Calu3 (cell line): ENCODE measurements at regions of chr2 and their contacts with region 1.

Region 1: GRCh38 chr2:137117386-137117785 is 352.0 kb downstream of the THSD7B start:
- DNase-seq: no peak
- H3K4me3 Mint-ChIP-seq: no peak overlapping the region
- H3K27ac Mint-ChIP-seq: no peak overlapping the region
- H3K4me1 Mint-ChIP-seq: peaks cover 28% of the 10 kb centered on the region
- H3K27me3 Mint-ChIP-seq: no peaks in the 10 kb centered on the region
- CTCF ChIP-seq: no peak

Region 2: GRCh38 chr2:137133225-137133624 is 15.8 kb after region 1 on chr2:
- CTCF ChIA-PET with region 1: no interaction called
- intact Hi-C with region 1: loop called (anchors 2 kb)
- DNase-seq: no peak
- H3K4me3 Mint-ChIP-seq: peak overlapping the region; percentile 23
- H3K27ac Mint-ChIP-seq: peak overlapping the region; percentile 12
- H3K4me1 Mint-ChIP-seq: peaks cover 14% of the 10 kb centered on the region
- H3K27me3 Mint-ChIP-seq: no peaks in the 10 kb centered on the region
- CTCF ChIP-seq: no peak

Region 3: DNA sequence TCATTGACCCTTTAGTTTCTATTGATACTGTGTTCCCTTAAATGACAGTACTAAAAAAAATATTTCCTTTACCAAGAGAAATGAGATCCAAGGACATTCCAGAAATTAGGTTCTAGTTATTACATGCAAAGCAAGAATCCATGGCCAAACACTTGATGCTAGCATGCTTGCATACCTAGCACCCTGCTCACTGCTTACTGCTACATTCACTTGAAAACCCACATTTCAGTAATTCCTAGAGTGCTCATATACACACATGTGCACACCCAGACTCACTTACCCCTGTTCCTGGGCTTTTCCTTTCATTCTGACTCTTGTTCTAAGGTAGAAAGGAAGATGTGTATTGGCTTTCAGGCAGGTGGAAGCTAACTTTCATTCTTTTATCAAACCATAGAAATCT is 43.9 kb after region 1 on chr2:
- CTCF ChIA-PET with region 1: no interaction called
- intact Hi-C with region 1: no loop called
- DNase-seq: no peak
- H3K4me3 Mint-ChIP-seq: no peak overlapping the region
- H3K27ac Mint-ChIP-seq: no peak overlapping the region
- H3K4me1 Mint-ChIP-seq: no peaks in the 10 kb centered on the region
- H3K27me3 Mint-ChIP-seq: no peaks in the 10 kb centered on the region
- CTCF ChIP-seq: no peak